ENCODE measurements at regions of chr22 and their contacts with region 1.

Region 1: GRCh38 chr22:42732081-42732480 is 11.4 kb upstream of the A4GALT start:
- DNase-seq: no peak
- ATAC-seq: no peak
- H3K4me3 Mint-ChIP-seq: no peak overlapping the region
- H3K27ac Mint-ChIP-seq: no peak overlapping the region
- H3K4me1 Mint-ChIP-seq: peaks cover 6% of the 10 kb centered on the region
- H3K27me3 Mint-ChIP-seq: peaks cover 2% of the 10 kb centered on the region
- CTCF ChIP-seq: no peak

Region 2: GRCh38 chr22:42679691-42680090 is 52.4 kb before region 1 on chr22:
- CTCF ChIA-PET with region 1: no interaction called
- POLR2A ChIA-PET with region 1: interaction called, 10 read pairs
- intact Hi-C with region 1: no loop called
- DNase-seq: no peak
- ATAC-seq: no peak
- H3K4me3 Mint-ChIP-seq: no peak overlapping the region
- H3K27ac Mint-ChIP-seq: no peak overlapping the region
- H3K4me1 Mint-ChIP-seq: no peaks in the 10 kb centered on the region
- H3K27me3 Mint-ChIP-seq: no peaks in the 10 kb centered on the region
- CTCF ChIP-seq: no peak